Naive thymus-derived CD4-positive, alpha-beta T cell (primary cell): ENCODE measurements at regions of chr1 and their contacts with region 1.

Region 1: DNA sequence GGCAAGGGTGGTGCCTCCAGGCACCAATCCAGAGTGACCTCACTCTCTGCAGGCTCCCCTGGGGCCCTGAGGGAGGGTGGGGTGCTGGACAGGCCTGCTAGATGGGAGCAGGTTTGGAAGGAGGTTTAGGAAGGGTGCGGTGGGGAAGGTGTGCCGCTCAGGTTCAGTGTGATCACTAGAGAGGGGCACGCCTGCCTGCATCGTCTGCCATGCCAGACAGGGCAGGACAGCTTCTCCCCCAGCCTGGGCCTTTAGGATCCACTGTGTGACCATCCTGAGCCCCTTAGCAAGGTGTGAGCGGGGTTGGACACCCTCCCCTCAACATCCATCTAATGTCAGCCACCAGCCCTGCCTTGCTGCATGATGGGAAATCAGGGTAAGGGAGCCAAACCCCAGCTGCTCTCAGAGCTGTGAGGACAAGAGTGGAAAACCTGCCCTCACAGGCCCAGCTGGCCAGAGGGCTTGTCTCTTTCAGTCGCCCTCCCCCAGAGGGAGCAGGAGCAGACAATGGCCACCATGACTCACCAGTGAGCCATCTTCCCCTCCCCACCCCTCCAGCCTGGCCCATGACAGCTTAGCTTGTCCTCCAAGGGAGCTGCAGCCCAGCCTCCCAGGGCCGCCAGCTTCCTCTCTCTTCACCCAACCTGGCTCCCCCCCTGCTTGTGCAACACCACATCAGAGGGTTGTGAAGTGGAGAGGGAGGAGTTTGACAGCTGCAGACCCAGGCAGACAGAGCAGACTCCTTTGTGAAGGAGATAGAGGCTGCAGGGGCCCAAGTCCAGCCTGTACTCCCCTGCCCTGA is 37.0 kb downstream of the NUAK2 start:
- DNase-seq: peak; percentile 65 to 92 (median 89)
- ATAC-seq: peak; percentile 79
- H3K4me3 ChIP-seq: peak overlapping the region; percentile 51
- H3K4me3 Mint-ChIP-seq: peak overlapping the region; percentile 63 to 89 (median 80)
- H3K27ac ChIP-seq: peak overlapping the region; percentile 83
- H3K27ac Mint-ChIP-seq: peak overlapping the region; percentile 90 to 99 (median 97)
- H3K4me1 ChIP-seq: peaks cover 61 to 78% of the 10 kb centered on the region in 2 donors
- H3K4me1 Mint-ChIP-seq: peaks cover 67 to 95% (median 80%) of the 10 kb centered on the region in 7 donors
- H3K27me3 ChIP-seq: no peaks in the 10 kb centered on the region
- H3K27me3 Mint-ChIP-seq: peaks cover 0 to 20% (median 0%) of the 10 kb centered on the region in 5 donors

Region 2: GRCh38 chr1:203326830-203327683 is 1957.5 kb before region 1 on chr1:
- CTCF ChIA-PET with region 1: no interaction called
- POLR2A ChIA-PET with region 1: no interaction called
- intact Hi-C with region 1: loop called in 1 of 2 experiments (anchors 10 kb)
- DNase-seq: peak; percentile 90 to 96 (median 94)
- ATAC-seq: peak; percentile 84
- H3K4me3 ChIP-seq: peak overlapping the region; percentile 72
- H3K4me3 Mint-ChIP-seq: peak overlapping the region; percentile 80 to 89 (median 86)
- H3K27ac ChIP-seq: peak overlapping the region; percentile 98
- H3K27ac Mint-ChIP-seq: peak overlapping the region; percentile 90 to 100 (median 99)
- H3K4me1 ChIP-seq: peaks cover 55 to 56% of the 10 kb centered on the region in 2 donors
- H3K4me1 Mint-ChIP-seq: peaks cover 40 to 73% (median 70%) of the 10 kb centered on the region in 7 donors
- H3K27me3 ChIP-seq: no peaks in the 10 kb centered on the region
- H3K27me3 Mint-ChIP-seq: no peaks in the 10 kb centered on the region

Region 3: DNA sequence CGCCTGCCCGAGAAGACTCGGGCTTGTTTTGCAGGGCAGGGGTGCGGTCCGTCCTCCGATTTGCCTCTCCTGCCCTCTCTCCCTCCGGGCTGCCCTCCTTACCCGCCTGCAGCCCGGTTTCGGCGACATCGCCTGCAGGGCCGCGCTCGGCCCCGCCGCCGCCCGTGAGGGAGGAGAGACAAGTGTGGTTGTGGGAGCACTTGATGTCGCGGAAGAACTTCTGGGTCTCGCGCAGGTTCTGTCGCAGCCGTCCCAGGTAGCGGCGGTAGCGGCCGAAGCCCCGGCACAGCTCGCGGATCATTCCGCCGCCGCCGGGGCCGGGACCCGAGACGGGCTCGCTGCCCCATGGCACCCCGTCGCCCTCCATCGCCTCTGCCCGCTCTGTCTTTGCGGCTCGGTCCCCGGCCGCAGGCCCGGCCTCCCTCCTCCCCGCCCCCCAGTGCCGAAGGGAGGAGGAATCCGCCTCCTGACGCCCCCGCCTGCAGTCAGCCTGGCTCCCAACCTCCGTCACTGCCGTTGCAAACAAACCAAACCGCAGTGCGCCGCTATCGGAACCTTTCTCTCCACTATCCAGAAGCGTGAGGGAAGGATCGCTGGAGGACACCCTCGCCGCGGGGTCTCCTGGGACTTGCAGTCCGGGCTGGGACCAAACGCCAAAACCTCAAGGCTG is 73.2 kb before region 1 on chr1 and contains the start of gene DSTYK:
- CTCF ChIA-PET with region 1: no interaction called
- POLR2A ChIA-PET with region 1: interaction called, 4 read pairs
- intact Hi-C with region 1: loop called in 1 of 2 experiments (anchors 2 kb)
- DNase-seq: peak; percentile 77 to 95 (median 93)
- ATAC-seq: peak; percentile 95
- H3K4me3 ChIP-seq: peak within 1 kb of the TSS; percentile 75
- H3K4me3 Mint-ChIP-seq: peak within 1 kb of the TSS; percentile 89 to 98 (median 96)
- H3K27ac ChIP-seq: peak within 1 kb of the TSS; percentile 87
- H3K27ac Mint-ChIP-seq: peak within 1 kb of the TSS; percentile 95 to 99 (median 98)
- H3K4me1 ChIP-seq: peaks cover 8% of the 10 kb centered on the region in 2 donors
- H3K4me1 Mint-ChIP-seq: peaks cover 12 to 66% (median 54%) of the 10 kb centered on the region in 7 donors
- H3K27me3 ChIP-seq: no peaks in the 10 kb centered on the region
- H3K27me3 Mint-ChIP-seq: peaks cover 0 to 4% (median 0%) of the 10 kb centered on the region in 5 donors
- total RNA-seq, gene DSTYK: 11.3 to 18.5 (median 15.2) TPM

Region 4: DNA sequence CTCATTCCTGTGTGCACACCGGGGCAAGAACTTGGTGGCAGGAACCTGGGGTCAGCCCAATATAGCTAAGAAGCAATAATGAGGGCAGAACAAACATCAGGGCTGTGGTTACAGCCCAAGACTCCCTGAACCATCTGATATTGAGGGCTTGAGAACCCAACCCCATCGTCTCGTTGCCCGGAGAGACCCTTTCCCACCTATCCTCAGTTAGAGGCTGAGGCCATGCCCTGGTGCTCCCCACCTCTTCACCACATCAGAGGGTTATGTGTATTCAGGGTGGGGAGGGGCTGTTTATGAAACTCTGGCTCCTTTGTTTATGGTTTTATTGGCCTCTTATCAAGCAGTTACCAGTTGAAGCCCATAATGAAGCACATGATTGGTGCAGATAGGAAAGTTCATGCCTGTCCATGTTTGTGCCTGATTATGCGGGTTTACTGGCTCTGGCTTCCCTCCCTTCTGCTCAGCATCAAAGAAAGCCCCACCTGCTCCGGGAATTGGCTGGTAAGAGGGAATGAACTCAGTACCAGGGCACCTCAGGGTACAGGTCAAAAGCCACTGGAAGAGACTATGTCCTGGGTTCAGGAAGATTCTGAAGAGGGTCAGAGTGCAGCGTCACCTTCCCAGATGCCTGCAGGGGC is 22.5 kb after region 1 on chr1:
- CTCF ChIA-PET with region 1: interaction called, 955 read pairs
- POLR2A ChIA-PET with region 1: interaction called, 1,119 read pairs
- intact Hi-C with region 1: no loop called
- DNase-seq: no peak
- ATAC-seq: no peak
- H3K4me3 ChIP-seq: no peak overlapping the region
- H3K4me3 Mint-ChIP-seq: no peak overlapping the region
- H3K27ac ChIP-seq: peak overlapping the region; percentile 34
- H3K27ac Mint-ChIP-seq: peak overlapping the region in 8 of 9 donors; percentile 65 to 87 (median 78)
- H3K4me1 ChIP-seq: peaks cover 9 to 40% of the 10 kb centered on the region in 2 donors
- H3K4me1 Mint-ChIP-seq: peaks cover 39 to 78% (median 72%) of the 10 kb centered on the region in 7 donors
- H3K27me3 ChIP-seq: no peaks in the 10 kb centered on the region
- H3K27me3 Mint-ChIP-seq: no peaks in the 10 kb centered on the region

Region 5: GRCh38 chr1:205485338-205486228 is 201.0 kb after region 1 on chr1:
- CTCF ChIA-PET with region 1: interaction called, 3 read pairs
- POLR2A ChIA-PET with region 1: no interaction called
- intact Hi-C with region 1: loop called in 1 of 2 experiments (anchors 10 kb)
- DNase-seq: peak; percentile 37 to 75 (median 64)
- ATAC-seq: peak; percentile 84
- H3K4me3 ChIP-seq: no peak overlapping the region
- H3K4me3 Mint-ChIP-seq: no peak overlapping the region
- H3K27ac ChIP-seq: no peak overlapping the region
- H3K27ac Mint-ChIP-seq: no peak overlapping the region
- H3K4me1 ChIP-seq: peaks cover 0 to 19% of the 10 kb centered on the region in 2 donors
- H3K4me1 Mint-ChIP-seq: peaks cover 2 to 30% (median 10%) of the 10 kb centered on the region in 7 donors
- H3K27me3 ChIP-seq: peaks cover 0 to 7% of the 10 kb centered on the region in 2 donors
- H3K27me3 Mint-ChIP-seq: peaks cover 42 to 63% (median 57%) of the 10 kb centered on the region in 5 donors

Region 6: DNA sequence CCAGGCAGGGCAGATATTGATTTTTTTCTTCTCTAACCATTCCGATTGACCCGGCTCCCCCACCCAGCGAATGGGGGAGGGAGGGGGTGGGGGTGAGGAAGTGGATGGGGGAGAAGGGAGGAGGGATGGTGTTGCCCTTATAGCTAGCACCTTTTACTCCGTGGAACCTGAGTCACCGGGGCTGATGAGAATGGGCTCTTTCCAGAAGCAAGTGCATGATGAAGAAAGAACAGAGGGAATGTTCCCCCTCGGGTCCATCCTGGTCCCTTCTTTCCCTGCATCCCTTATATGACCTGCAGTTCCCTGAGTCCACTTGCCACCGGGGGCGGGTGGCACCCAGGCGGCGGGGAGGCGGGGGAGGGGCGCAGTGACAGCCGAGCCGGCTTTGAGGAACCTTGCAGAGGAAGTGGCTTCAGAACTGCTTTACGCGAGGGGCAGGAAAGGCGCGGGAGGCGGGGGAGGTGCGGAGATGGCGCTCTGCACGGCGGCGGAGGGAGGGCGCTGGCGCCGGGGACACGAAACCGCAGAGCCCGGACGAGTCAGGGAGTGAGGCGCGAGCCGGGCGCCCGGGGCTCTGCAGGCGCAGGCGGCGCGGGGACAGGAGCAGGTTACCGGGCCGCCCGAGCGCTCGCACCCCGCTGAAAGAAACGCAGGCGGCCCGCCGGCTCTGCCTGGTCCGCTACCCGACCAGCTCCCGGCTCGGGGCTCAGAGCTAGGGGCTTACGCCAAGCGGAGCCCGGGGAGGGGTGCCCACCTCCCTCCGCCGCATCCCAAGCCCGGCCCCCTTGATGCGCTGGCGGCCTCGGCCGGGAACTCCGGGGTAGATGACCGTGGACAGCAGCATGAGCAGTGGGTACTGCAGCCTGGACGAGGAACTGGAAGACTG is 1272.4 kb after region 1 on chr1:
- CTCF ChIA-PET with region 1: no interaction called
- POLR2A ChIA-PET with region 1: no interaction called
- intact Hi-C with region 1: loop called in 1 of 2 experiments (anchors 5 kb)
- DNase-seq: peak; percentile 78 to 93 (median 88)
- ATAC-seq: peak; percentile 86
- H3K4me3 ChIP-seq: peak overlapping the region; percentile 90
- H3K4me3 Mint-ChIP-seq: peak overlapping the region; percentile 77 to 99 (median 96)
- H3K27ac ChIP-seq: peak overlapping the region; percentile 90
- H3K27ac Mint-ChIP-seq: peak overlapping the region; percentile 86 to 100 (median 94)
- H3K4me1 ChIP-seq: peaks cover 61 to 66% of the 10 kb centered on the region in 2 donors
- H3K4me1 Mint-ChIP-seq: peaks cover 59 to 75% (median 70%) of the 10 kb centered on the region in 7 donors
- H3K27me3 ChIP-seq: no peaks in the 10 kb centered on the region
- H3K27me3 Mint-ChIP-seq: no peaks in the 10 kb centered on the region